ENCODE measurements at regions of chr5 and their contacts with region 1.

Region 1: DNA sequence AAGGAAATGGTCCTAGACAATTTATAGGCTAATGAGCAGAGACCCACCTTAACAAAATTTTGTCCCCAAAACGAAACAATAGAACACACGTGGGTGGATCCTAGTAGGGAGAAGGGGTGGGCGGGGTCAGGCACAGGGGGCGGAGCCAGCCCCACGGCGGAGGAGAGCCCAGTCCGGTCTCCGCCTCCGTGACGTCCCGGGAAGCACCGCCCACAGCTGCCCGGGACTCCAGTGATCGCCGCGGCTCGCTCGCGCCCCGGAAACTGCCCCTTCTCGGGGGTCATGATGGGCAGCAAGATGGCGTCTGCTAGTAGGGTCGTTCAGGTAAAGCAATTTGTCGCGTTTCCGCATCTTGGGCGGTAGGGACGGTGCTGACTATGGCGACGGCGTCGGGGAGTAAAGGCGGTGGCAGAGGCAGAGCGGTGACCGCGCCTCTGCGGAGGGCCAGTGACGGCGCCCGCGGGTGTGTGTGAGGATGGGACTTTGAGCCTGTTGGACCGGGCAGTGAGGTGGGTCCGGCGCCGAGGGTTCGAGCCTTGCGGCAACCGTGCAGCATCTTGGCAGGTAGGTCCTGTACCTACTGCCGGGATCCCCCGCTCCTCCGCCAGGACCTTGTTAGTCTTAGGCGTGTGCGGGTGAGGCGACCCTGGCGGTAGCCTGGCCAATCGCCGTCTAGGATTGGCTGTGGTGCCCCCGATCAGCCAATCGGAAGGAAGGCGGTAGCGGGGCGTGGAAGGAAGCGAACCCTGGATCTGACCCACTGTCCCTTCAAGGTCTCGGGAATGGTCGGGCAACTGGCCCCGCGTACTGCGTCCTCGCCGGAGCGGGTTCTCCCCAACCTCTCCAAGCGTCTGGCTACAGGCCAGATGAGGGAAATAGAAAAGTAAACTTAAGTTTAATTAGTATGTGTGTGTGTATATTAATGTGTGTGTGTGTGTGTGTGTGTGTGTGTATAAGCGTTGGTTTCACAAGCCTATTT is 16.8 kb upstream of the CDK7 start:
- DNase-seq: peak; percentile 81 to 93 (median 86)
- ATAC-seq: peak; percentile 97
- H3K4me3 ChIP-seq: peak overlapping the region; percentile 100
- H3K4me3 Mint-ChIP-seq: peak overlapping the region; percentile 95 to 99 (median 96)
- H3K27ac ChIP-seq: peak overlapping the region; percentile 92
- H3K27ac Mint-ChIP-seq: peak overlapping the region; percentile 96 to 99 (median 97)
- H3K4me1 ChIP-seq: peaks cover 5 to 8% of the 10 kb centered on the region in 2 donors
- H3K4me1 Mint-ChIP-seq: peaks cover 2 to 37% (median 29%) of the 10 kb centered on the region in 7 donors
- H3K27me3 ChIP-seq: no peaks in the 10 kb centered on the region
- H3K27me3 Mint-ChIP-seq: no peaks in the 10 kb centered on the region

Region 2: DNA sequence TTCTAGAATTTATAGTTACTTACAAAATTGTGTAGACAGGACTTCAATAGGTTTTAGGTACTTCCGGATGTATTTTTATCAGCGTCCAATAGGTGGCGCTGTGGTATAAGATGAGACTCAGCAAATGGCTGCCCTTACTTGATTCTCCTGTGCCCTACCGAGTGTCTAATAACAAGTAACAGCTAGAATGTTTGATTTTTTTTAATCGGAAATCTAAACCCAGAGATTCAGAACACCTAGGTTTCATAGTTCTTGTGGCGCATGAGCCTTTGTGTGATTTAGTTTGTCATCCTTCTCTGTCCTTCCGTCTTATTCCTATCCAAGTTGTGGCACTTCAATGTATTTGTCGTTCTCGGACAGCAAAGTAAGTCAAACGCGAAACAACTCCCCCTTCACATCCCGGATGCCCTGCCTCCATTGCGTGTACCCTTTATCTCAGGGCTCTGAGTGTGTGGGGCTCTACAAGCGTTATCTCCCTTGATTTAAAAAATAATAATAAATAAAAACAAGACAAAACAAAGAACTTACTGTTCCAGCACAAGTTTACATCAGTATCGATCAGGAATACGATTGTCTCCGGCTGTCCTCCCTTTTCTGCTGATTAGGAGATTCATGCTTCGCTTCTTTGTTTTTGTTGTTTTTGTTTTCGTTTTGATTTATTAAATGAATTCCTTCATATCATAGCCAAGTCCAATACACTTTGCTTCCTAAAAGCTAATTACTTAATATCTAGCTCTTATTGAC is 174.8 kb before region 1 on chr5:
- CTCF ChIA-PET with region 1: interaction called, 3 read pairs
- POLR2A ChIA-PET with region 1: no interaction called
- intact Hi-C with region 1: loop called in 1 of 2 experiments (anchors 1 kb)
- DNase-seq: peak; percentile 42 to 93 (median 88)
- ATAC-seq: peak; percentile 100
- H3K4me3 ChIP-seq: peak overlapping the region; percentile 72
- H3K4me3 Mint-ChIP-seq: peak overlapping the region; percentile 74 to 93 (median 88)
- H3K27ac ChIP-seq: peak overlapping the region; percentile 74
- H3K27ac Mint-ChIP-seq: peak overlapping the region; percentile 70 to 96 (median 92)
- H3K4me1 ChIP-seq: no peaks in the 10 kb centered on the region
- H3K4me1 Mint-ChIP-seq: peaks cover 0 to 14% (median 6%) of the 10 kb centered on the region in 7 donors
- H3K27me3 ChIP-seq: no peaks in the 10 kb centered on the region
- H3K27me3 Mint-ChIP-seq: peaks cover 0 to 5% (median 0%) of the 10 kb centered on the region in 5 donors

Region 3: DNA sequence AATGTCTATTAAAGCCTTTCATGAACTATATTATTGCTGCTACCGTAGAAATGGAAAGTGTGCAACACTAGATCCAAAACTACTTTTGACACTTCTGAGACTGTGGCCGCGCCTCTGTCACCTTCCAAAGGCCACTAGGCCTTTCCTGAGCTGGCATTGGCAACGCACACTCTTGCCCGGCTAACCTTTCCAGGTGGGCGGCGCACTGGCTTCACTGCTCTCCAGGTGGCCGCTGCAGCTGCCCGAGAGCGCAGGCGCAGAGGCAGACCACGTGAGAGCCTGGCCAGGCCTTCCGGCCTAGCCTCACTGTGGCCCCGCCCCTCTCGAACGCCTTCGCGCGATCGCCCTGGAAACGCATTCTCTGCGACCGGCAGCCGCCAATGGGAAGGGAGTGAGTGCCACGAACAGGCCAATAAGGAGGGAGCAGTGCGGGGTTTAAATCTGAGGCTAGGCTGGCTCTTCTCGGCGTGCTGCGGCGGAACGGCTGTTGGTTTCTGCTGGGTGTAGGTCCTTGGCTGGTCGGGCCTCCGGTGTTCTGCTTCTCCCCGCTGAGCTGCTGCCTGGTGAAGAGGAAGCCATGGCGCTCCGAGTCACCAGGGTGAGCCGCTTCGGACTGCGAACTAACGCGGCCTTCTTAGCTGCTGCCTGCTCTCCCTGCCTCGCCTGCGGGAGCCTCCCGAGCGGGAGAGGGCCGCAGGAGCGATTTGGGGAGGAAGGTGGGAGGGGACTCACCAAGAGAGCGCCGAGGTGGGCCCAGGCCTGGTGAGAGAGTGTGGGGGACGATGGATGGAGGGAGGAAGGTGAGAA is 50.9 kb before region 1 on chr5 and contains the start of gene CCNB1:
- CTCF ChIA-PET with region 1: no interaction called
- POLR2A ChIA-PET with region 1: no interaction called
- intact Hi-C with region 1: loop called (anchors 1 kb)
- DNase-seq: peak; percentile 91 to 98 (median 94)
- ATAC-seq: peak; percentile 100
- H3K4me3 ChIP-seq: peak within 1 kb of the TSS; percentile 78
- H3K4me3 Mint-ChIP-seq: peak within 1 kb of the TSS; percentile 88 to 98 (median 94)
- H3K27ac ChIP-seq: peak within 1 kb of the TSS; percentile 68
- H3K27ac Mint-ChIP-seq: peak within 1 kb of the TSS; percentile 77 to 94 (median 90)
- H3K4me1 ChIP-seq: peaks cover 5 to 15% of the 10 kb centered on the region in 2 donors
- H3K4me1 Mint-ChIP-seq: peaks cover 17 to 44% (median 26%) of the 10 kb centered on the region in 7 donors
- H3K27me3 ChIP-seq: no peaks in the 10 kb centered on the region
- H3K27me3 Mint-ChIP-seq: no peaks in the 10 kb centered on the region
- total RNA-seq, gene CCNB1: 1.3 to 110 (median 3.4) TPM

Region 4: DNA sequence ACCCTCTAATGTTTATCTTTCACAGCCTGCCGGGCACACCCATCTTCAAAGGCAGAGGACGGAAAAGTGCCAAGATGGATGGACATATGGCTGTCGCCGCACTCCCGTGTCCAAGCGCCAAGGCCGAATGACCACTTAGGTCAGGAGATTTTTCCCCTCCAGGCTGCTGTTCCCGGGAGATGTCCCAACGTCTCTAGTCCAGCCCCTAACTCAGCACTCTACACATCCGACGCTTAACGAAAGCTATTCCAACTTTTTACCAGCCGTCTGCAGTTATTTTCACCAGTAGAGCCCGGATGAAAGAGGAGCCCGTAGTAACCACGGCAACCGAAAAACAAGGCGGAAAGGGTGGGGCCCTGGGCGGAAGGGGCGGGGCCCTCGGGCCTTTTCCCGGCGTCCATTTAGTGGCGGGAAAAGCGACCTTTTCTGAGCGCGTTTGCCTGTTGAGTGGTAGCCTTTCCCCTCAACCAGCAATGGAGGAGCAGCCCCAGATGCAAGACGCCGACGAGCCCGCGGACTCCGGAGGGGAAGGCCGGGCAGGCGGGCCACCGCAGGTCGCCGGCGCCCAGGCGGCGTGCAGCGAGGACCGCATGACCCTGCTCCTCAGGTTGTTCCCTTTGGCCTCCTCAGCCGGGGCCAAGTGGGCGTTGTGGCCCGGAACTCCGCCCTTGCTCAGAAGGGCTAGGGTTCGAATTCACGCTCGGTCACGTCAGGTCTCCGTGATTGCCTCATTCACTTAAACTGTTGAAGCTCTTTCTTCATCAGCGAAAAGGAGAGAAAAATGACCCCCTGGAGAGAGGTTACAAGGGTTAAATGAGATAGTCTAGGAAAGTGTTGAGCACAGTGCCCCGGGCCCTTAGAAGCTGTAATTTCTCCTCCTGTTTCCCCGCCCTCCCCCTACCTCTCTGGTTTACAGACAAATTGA is 28.4 kb before region 1 on chr5 and contains the start of gene CENPH:
- CTCF ChIA-PET with region 1: interaction called, 5 read pairs
- POLR2A ChIA-PET with region 1: no interaction called
- intact Hi-C with region 1: loop called (anchors 1 kb)
- DNase-seq: peak; percentile 83 to 92 (median 90)
- ATAC-seq: peak; percentile 99
- H3K4me3 ChIP-seq: peak within 1 kb of the TSS; percentile 99
- H3K4me3 Mint-ChIP-seq: peak within 1 kb of the TSS; percentile 86 to 96 (median 92)
- H3K27ac ChIP-seq: peak within 1 kb of the TSS; percentile 75
- H3K27ac Mint-ChIP-seq: peak within 1 kb of the TSS; percentile 85 to 96 (median 92)
- H3K4me1 ChIP-seq: peaks cover 9 to 11% of the 10 kb centered on the region in 2 donors
- H3K4me1 Mint-ChIP-seq: peaks cover 0 to 19% (median 16%) of the 10 kb centered on the region in 7 donors
- H3K27me3 ChIP-seq: no peaks in the 10 kb centered on the region
- H3K27me3 Mint-ChIP-seq: no peaks in the 10 kb centered on the region
- total RNA-seq, gene CENPH: 3.4 to 25.3 (median 8.2) TPM